ENCODE measurements at regions of chr12 and their contacts with region 1.

Region 1: DNA sequence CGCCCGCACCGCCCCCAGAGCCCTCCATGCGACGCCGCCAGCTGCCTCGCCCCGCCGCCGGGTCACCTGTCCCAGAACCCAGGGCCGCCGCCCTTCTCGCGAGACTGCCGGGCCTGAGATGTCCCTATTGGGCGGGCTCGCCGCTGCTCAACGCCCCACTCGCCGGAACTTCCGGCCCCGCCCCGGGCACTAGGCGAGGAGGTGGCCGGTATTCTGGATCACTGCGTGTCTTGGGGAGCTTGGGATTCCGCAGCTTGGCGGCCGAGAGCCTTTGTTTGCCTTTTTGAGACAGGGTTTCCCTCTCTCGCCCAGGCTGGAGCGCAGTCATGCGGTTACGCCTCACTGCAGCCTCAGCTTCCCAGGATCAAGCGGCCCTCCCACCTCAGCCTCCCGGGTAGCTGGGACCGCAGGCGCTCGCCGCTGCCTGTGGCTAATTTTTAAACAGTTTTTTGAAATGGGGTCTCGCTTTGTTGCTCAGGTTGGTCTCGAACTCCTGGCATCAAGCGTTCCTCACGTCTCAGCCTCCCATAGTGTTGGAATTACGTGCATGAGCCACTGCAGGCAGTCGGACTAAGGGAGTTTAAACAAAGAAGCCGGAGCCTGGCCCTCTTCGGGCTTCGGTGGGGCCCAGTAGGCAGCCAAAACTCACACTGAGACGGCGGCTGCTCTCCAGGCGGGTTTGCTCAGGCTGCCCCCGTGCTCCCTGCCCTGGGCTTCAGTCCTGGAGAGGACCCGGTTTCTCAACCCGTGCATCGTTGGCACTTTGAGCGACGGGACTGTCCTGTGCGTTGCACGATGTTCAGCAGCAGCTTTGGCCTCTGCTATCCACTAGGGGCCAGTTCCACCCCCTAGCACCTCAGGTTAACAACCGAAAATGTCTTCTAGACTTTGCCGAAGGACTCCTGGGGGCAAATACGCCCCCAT is at the start of gene SLC15A4:
- DNase-seq: peak; percentile 85
- H3K4me3 ChIP-seq: peak within 1 kb of the TSS; percentile 67 to 90 (median 67)
- H3K27ac ChIP-seq: peak within 1 kb of the TSS; percentile 55
- H3K4me1 ChIP-seq: peaks cover 2% of the 10 kb centered on the region
- H3K27me3 ChIP-seq: no peaks in the 10 kb centered on the region
- CTCF ChIP-seq: peak in 1 of 2 donors; percentile 7
- POLR2A ChIP-seq: peak; percentile 94
- total RNA-seq, gene SLC15A4: 24.5 and 24.6 TPM in 2 replicates

Region 2: DNA sequence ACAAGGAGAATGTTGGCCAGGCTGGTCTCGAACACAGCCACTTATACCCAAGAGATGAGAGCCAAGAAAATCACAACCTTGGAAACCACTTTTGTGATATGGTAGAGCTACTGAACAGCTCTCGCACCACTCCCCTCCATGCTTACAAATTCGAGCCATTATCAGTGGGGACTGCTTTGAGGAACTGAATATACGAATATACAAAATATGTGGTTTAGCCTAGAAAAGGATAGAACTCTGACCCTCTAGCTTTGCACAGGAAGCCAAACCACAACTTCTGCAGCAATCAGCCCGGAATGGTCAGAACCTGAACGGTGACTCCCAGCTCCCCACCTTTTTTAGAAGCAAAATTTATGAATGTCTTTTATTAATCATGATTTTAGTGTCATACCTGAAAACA is 687.0 kb before region 1 on chr12:
- CTCF ChIA-PET with region 1: no interaction called
- POLR2A ChIA-PET with region 1: no interaction called
- dilution Hi-C with region 1: no loop called
- intact Hi-C with region 1: no loop called
- DNase-seq: no peak
- H3K4me3 ChIP-seq: no peak overlapping the region
- H3K27ac ChIP-seq: no peak overlapping the region
- H3K4me1 ChIP-seq: no peaks in the 10 kb centered on the region
- H3K27me3 ChIP-seq: no peaks in the 10 kb centered on the region
- CTCF ChIP-seq: no peak
- POLR2A ChIP-seq: no peak

Region 3: DNA sequence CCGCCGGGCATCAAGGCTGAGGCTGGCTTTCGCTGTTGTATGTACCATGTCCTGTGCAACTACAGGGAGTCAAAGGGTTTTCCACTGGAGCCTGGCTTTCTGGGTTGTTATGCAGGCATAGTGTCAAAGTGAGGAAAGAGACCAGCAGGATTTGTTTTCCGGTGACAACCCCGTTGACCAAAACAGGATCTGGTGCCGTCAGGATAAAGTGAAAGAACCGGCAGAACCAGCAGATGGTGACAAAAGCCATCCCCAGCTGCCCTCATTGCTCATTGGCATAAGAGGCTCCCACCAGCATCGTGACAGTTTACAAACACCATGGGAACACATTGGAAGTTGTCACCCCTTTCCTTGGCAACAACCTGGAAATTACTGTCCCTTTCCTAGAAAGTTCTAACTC is 81.2 kb before region 1 on chr12:
- CTCF ChIA-PET with region 1: no interaction called
- POLR2A ChIA-PET with region 1: no interaction called
- dilution Hi-C with region 1: no loop called
- intact Hi-C with region 1: no loop called
- DNase-seq: no peak
- H3K4me3 ChIP-seq: no peak overlapping the region
- H3K27ac ChIP-seq: no peak overlapping the region
- H3K4me1 ChIP-seq: no peaks in the 10 kb centered on the region
- H3K27me3 ChIP-seq: no peaks in the 10 kb centered on the region
- CTCF ChIP-seq: no peak
- POLR2A ChIP-seq: no peak

Region 4: DNA sequence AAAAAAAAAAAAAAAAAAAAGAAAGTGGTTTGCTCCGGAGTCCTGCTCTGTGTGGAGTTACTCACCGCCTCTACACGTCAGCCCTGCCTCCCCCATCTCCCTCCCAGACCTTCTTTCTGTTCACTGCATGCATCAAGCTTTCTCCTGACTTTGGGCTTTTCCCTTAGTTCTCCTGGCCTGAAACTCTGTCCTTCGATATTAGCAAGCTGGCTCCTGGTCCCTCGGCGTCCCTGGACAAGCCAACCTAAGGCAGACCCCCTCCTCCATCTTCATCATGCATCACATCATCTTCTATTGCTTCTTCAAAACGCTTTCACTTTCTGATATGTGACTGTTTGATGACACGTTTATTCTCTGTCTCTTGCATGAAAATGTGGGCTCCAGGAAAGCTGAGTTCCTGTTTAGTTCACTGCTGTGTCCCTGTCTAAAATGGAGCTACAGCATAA is 41.0 kb before region 1 on chr12:
- CTCF ChIA-PET with region 1: interaction called, 9 read pairs
- POLR2A ChIA-PET with region 1: no interaction called
- dilution Hi-C with region 1: no loop called
- intact Hi-C with region 1: loop called (anchors 1 kb)
- DNase-seq: no peak
- H3K4me3 ChIP-seq: no peak overlapping the region
- H3K27ac ChIP-seq: no peak overlapping the region
- H3K4me1 ChIP-seq: no peaks in the 10 kb centered on the region
- H3K27me3 ChIP-seq: no peaks in the 10 kb centered on the region
- CTCF ChIP-seq: no peak
- POLR2A ChIP-seq: no peak

Region 5: DNA sequence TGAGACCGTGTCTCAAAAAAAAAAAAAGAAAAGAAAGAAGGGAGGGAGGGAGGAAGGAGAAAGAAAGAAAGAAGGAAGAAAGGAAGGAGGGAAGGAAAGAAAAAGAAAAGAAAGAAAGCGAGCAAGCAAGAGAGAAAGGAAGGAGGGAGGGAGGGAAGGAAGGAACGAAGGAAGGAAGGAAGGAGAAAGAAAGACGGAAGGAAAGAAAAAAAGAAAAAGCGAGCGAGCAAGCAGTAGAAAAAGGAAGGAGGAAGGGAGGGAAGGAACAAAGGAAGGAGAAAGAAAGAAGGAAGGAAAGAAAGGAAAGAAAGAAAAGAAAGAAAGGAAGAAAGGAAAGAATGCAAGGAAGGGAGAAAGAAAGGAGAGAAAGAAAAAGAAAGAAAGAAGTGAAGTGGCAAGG is 533.1 kb after region 1 on chr12:
- CTCF ChIA-PET with region 1: no interaction called
- POLR2A ChIA-PET with region 1: no interaction called
- dilution Hi-C with region 1: no loop called
- intact Hi-C with region 1: no loop called
- DNase-seq: no peak
- H3K4me3 ChIP-seq: no peak overlapping the region
- H3K27ac ChIP-seq: no peak overlapping the region
- H3K4me1 ChIP-seq: no peaks in the 10 kb centered on the region
- H3K27me3 ChIP-seq: no peaks in the 10 kb centered on the region
- CTCF ChIP-seq: no peak
- POLR2A ChIP-seq: no peak

Measured in endothelial cell of umbilical vein (primary cell).